ENCODE measurements at regions of chr22 and their contacts with region 1.

Region 1: DNA sequence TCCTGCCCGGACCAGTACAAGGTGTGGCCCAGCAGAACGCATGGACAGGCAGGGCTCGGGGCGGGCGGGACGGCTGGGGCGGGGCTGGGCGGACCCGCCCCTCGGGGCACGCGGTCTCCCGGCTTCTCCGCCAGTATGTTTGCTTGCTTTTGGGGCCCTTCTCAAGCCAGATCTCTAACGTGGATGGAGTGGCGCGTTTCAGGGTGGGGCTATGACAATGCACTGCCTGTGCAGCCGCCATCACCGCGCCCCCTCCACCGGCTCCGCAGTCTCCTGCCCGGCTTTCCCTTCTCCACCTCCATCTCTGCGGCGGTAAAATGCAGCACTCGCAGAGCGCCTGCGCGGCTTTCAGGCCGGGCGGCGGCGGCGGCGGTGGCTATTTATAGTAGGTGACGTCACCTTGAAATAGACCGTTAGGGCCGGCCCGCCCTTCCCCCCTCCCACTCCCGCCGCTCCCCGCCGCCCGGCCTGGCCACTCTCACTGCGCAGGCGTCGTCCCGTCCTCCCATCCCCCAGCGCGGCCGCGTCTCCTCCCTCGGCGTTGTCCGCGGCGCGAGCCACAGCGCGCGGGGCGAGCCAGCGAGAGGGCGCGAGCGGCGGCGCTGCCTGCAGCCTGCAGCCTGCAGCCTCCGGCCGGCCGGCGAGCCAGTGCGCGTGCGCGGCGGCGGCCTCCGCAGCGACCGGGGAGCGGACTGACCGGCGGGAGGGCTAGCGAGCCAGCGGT is at the start of gene YWHAH:
- DNase-seq: peak; percentile 69 to 96 (median 79)
- ATAC-seq: peak; percentile 82
- H3K4me3 ChIP-seq: peak within 1 kb of the TSS; percentile 87
- H3K4me3 Mint-ChIP-seq: peak within 1 kb of the TSS in 6 of 10 donors; percentile 89 to 94 (median 92)
- H3K27ac ChIP-seq: peak within 1 kb of the TSS; percentile 76
- H3K27ac Mint-ChIP-seq: peak within 1 kb of the TSS in 8 of 9 donors; percentile 74 to 95 (median 85)
- H3K4me1 ChIP-seq: peaks cover 18 to 21% of the 10 kb centered on the region in 2 donors
- H3K4me1 Mint-ChIP-seq: peaks cover 7 to 30% (median 14%) of the 10 kb centered on the region in 7 donors
- H3K27me3 ChIP-seq: no peaks in the 10 kb centered on the region
- H3K27me3 Mint-ChIP-seq: no peaks in the 10 kb centered on the region
- total RNA-seq, gene YWHAH: 11.7 to 130 (median 17.1) TPM

Region 2: GRCh38 chr22:31399211-31400028 is 544.7 kb before region 1 on chr22 and contains the start of gene DRG1:
- CTCF ChIA-PET with region 1: no interaction called
- POLR2A ChIA-PET with region 1: no interaction called
- intact Hi-C with region 1: loop called in 1 of 2 experiments (anchors 2 kb)
- DNase-seq: peak; percentile 90 to 98 (median 93)
- ATAC-seq: peak; percentile 99
- H3K4me3 ChIP-seq: peak within 1 kb of the TSS; percentile 88
- H3K4me3 Mint-ChIP-seq: peak within 1 kb of the TSS; percentile 92 to 99 (median 96)
- H3K27ac ChIP-seq: peak within 1 kb of the TSS; percentile 91
- H3K27ac Mint-ChIP-seq: peak within 1 kb of the TSS; percentile 85 to 97 (median 94)
- H3K4me1 ChIP-seq: peaks cover 10 to 15% of the 10 kb centered on the region in 2 donors
- H3K4me1 Mint-ChIP-seq: peaks cover 5 to 35% (median 22%) of the 10 kb centered on the region in 7 donors
- H3K27me3 ChIP-seq: no peaks in the 10 kb centered on the region
- H3K27me3 Mint-ChIP-seq: no peaks in the 10 kb centered on the region
- total RNA-seq, gene DRG1: 53.3 to 109 (median 84.4) TPM

Region 3: DNA sequence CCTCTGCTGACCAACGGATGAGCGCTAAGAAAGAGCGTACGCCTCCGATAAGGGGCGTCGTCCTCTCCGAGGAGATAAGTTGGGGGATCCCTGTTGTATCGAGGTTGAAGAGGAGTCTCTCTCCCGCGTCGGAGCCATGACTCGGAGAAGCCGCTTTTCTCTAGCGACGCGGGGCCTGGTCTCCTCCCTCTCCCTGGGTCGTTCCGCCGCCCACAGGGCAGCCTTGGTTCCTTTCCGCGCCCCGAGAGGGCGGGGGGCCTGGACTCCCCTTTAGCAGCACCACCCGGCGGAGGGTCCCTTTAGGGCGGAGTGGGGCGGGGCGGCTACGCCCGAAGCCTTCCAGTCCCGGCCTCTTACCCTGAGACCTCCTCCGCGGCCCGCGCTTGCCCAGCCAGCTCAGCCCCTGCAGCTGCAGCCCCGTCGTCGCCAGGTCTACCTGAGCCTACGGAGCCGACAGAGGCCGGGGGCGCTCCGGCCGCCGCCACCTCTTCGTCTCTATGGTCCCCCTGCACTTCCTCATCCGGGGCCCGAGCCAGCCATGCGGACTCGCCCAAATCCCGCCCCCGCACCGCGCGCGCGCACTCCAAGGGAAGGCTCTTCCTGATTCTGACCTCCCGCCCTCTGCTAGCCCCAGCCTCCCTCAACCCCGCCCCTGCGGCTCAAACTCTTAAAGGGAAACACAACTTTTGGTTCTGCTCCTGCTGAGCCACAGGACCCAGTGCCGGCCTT is 194.3 kb before region 1 on chr22 and contains the start of gene PRR14L:
- CTCF ChIA-PET with region 1: no interaction called
- POLR2A ChIA-PET with region 1: interaction called, 4 read pairs
- intact Hi-C with region 1: loop called (anchors 1 kb)
- DNase-seq: peak; percentile 94 to 100 (median 98)
- ATAC-seq: peak; percentile 86
- H3K4me3 ChIP-seq: peak within 1 kb of the TSS; percentile 92
- H3K4me3 Mint-ChIP-seq: peak within 1 kb of the TSS; percentile 87 to 97 (median 94)
- H3K27ac ChIP-seq: peak within 1 kb of the TSS; percentile 83
- H3K27ac Mint-ChIP-seq: peak within 1 kb of the TSS; percentile 82 to 98 (median 96)
- H3K4me1 ChIP-seq: peaks cover 31 to 37% of the 10 kb centered on the region in 2 donors
- H3K4me1 Mint-ChIP-seq: peaks cover 36 to 65% (median 59%) of the 10 kb centered on the region in 7 donors
- H3K27me3 ChIP-seq: no peaks in the 10 kb centered on the region
- H3K27me3 Mint-ChIP-seq: peaks cover 0 to 2% (median 0%) of the 10 kb centered on the region in 5 donors
- total RNA-seq, gene PRR14L: 43.1 to 82.6 (median 66.9) TPM

Region 4: DNA sequence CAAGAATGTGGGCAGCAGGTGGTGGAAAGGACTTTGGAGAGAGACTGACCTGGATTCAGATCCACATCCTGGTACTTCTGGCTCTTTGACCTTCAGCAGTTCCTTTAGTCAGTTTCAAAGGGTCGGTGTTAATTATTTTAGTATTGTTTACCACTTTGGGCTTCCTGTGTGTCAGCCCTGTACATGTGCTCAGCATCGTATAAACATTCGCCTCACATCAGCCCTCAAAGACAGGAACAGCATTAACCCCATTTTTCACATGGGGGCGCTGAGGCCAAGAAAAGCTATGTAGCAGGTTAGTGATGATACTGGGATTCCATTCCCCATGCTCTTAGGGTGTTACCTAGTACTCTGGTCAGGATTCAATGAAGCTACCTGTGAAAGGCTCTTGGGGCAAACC is 71.9 kb before region 1 on chr22:
- CTCF ChIA-PET with region 1: interaction called, 3 read pairs
- POLR2A ChIA-PET with region 1: no interaction called
- intact Hi-C with region 1: loop called (anchors 1 to 2 kb)
- DNase-seq: peak in 1 of 9 donors; percentile 11
- ATAC-seq: no peak
- H3K4me3 ChIP-seq: no peak overlapping the region
- H3K4me3 Mint-ChIP-seq: no peak overlapping the region
- H3K27ac ChIP-seq: no peak overlapping the region
- H3K27ac Mint-ChIP-seq: no peak overlapping the region
- H3K4me1 ChIP-seq: no peaks in the 10 kb centered on the region
- H3K4me1 Mint-ChIP-seq: peaks cover 0 to 4% (median 0%) of the 10 kb centered on the region in 7 donors
- H3K27me3 ChIP-seq: no peaks in the 10 kb centered on the region
- H3K27me3 Mint-ChIP-seq: no peaks in the 10 kb centered on the region

Region 5: DNA sequence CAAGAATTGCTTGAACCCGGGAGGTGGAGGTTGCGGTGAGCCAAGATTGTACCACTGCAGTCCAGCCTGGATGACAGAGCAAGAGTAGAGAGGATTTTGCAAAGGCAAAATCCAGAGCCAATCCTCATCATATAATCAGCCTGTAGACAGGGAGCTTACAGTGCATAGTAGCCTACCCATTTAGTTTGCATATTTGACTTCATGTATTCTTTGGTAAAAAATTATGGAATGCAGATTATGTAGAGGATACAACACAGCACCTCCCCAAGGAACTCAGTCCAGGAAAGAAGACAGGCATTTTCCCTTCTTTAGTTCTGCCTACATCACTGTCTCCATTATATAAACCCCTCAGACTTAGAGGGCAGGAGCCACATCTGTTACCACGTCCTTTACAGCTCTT is 39.5 kb before region 1 on chr22:
- CTCF ChIA-PET with region 1: no interaction called
- POLR2A ChIA-PET with region 1: no interaction called
- intact Hi-C with region 1: no loop called
- DNase-seq: no peak
- ATAC-seq: no peak
- H3K4me3 ChIP-seq: no peak overlapping the region
- H3K4me3 Mint-ChIP-seq: no peak overlapping the region
- H3K27ac ChIP-seq: no peak overlapping the region
- H3K27ac Mint-ChIP-seq: no peak overlapping the region
- H3K4me1 ChIP-seq: no peaks in the 10 kb centered on the region
- H3K4me1 Mint-ChIP-seq: peaks cover 0 to 2% (median 0%) of the 10 kb centered on the region in 7 donors
- H3K27me3 ChIP-seq: no peaks in the 10 kb centered on the region
- H3K27me3 Mint-ChIP-seq: no peaks in the 10 kb centered on the region

Region 6: GRCh38 chr22:31954535-31955523 is 10.7 kb after region 1 on chr22:
- CTCF ChIA-PET with region 1: interaction called, 7 read pairs
- POLR2A ChIA-PET with region 1: interaction called, 14 read pairs
- intact Hi-C with region 1: no loop called
- DNase-seq: no peak
- ATAC-seq: peak; percentile 38
- H3K4me3 ChIP-seq: no peak overlapping the region
- H3K4me3 Mint-ChIP-seq: peak overlapping the region in 7 of 10 donors; percentile 1 to 56 (median 39)
- H3K27ac ChIP-seq: no peak overlapping the region
- H3K27ac Mint-ChIP-seq: peak overlapping the region in 7 of 9 donors; percentile 41 to 88 (median 80)
- H3K4me1 ChIP-seq: peaks cover 23 to 43% of the 10 kb centered on the region in 2 donors
- H3K4me1 Mint-ChIP-seq: peaks cover 44 to 67% (median 53%) of the 10 kb centered on the region in 7 donors
- H3K27me3 ChIP-seq: no peaks in the 10 kb centered on the region
- H3K27me3 Mint-ChIP-seq: no peaks in the 10 kb centered on the region

Region 7: DNA sequence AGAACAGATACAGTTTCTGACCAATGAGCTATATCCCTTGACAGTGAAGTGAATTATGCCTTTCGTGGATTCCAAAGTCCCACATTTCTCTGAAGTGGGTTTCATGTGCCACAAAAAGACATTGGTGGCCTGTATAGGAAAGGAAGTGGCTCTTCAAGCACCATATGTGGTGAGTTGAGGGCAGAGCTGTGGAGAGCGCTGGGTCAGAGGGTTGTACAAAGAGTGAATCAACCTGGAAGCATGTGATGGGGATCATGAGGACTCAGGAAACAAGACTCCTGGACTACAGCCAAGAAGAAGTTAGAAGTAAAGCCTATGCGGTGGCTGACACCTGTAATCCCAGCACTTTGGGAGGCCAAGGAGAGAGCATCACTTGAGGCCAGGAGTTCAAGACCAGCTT is 311.6 kb after region 1 on chr22:
- CTCF ChIA-PET with region 1: no interaction called
- POLR2A ChIA-PET with region 1: no interaction called
- intact Hi-C with region 1: no loop called
- DNase-seq: no peak
- ATAC-seq: no peak
- H3K4me3 ChIP-seq: no peak overlapping the region
- H3K4me3 Mint-ChIP-seq: no peak overlapping the region
- H3K27ac ChIP-seq: no peak overlapping the region
- H3K27ac Mint-ChIP-seq: no peak overlapping the region
- H3K4me1 ChIP-seq: no peaks in the 10 kb centered on the region
- H3K4me1 Mint-ChIP-seq: peaks cover 0 to 6% (median 0%) of the 10 kb centered on the region in 7 donors
- H3K27me3 ChIP-seq: no peaks in the 10 kb centered on the region
- H3K27me3 Mint-ChIP-seq: peaks cover 17 to 45% (median 30%) of the 10 kb centered on the region in 5 donors

Region 8: DNA sequence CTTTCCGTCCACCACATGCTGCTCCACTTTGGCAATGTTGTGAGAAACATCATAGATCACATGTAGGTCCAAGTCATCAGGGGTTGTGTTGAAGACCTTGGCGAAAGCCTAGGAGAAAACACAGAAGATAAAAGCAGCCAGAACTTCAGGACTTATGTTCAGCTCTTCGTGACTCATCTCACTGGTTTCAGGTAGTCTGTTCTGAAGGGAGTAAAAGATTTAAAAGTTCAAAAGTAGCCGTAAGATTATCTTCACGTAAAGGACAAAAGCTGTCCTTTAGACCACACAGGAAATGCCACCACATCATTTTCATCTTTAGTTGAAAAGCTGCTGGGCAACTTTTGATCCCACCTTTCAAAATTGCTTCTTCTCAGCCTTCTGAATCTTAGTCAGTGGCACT is 451.0 kb after region 1 on chr22:
- CTCF ChIA-PET with region 1: no interaction called
- POLR2A ChIA-PET with region 1: no interaction called
- intact Hi-C with region 1: no loop called
- DNase-seq: no peak
- ATAC-seq: no peak
- H3K4me3 ChIP-seq: no peak overlapping the region
- H3K4me3 Mint-ChIP-seq: no peak overlapping the region
- H3K27ac ChIP-seq: no peak overlapping the region
- H3K27ac Mint-ChIP-seq: peak overlapping the region in 3 of 9 donors; percentile 3 to 40 (median 20)
- H3K4me1 ChIP-seq: no peaks in the 10 kb centered on the region
- H3K4me1 Mint-ChIP-seq: peaks cover 0 to 6% (median 0%) of the 10 kb centered on the region in 7 donors
- H3K27me3 ChIP-seq: no peaks in the 10 kb centered on the region
- H3K27me3 Mint-ChIP-seq: no peaks in the 10 kb centered on the region

Region 9: DNA sequence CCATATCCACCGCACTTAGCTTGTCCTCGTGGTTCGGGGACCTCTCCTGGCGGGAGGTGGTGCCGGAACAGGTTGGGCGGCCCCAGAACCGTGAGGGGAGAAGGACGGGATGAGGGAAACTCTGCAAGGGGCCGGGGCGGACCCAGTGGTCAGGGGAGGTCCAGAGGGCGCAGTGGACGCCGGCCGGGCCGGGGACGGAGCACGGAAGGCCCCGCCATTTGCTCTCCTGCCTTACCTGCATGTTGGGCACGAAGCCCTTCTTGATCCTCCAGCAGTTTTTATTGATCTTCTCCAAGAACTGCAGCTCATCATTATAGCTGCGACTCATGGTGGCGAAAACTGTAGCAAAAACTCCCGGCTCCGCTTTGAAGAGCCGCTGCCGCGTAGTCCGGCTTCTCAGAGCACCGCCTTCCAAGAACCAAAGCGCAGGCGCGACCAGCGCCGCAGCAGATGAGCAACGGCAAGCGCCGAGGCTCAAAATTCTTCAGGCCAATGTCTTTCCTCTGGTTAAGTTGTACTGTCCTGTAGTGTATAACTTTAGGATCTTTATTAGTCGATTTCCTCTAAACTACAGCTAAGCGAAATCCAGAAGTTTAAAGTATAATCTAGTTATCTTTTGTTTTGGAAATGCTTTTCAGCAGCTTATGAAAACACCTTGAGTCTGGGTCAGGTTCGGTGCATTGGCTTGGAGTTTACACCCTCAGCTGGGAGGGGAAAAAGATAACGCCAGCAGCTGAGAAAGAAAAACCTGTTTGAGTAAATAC is 467.9 kb after region 1 on chr22 and contains the start of gene RTCB:
- CTCF ChIA-PET with region 1: no interaction called
- POLR2A ChIA-PET with region 1: no interaction called
- intact Hi-C with region 1: loop called in 1 of 2 experiments (anchors 1 kb)
- DNase-seq: peak; percentile 86 to 93 (median 90)
- ATAC-seq: peak; percentile 94
- H3K4me3 ChIP-seq: peak within 1 kb of the TSS; percentile 89
- H3K4me3 Mint-ChIP-seq: peak within 1 kb of the TSS; percentile 96 to 99 (median 98)
- H3K27ac ChIP-seq: peak within 1 kb of the TSS; percentile 92
- H3K27ac Mint-ChIP-seq: peak within 1 kb of the TSS; percentile 90 to 98 (median 96)
- H3K4me1 ChIP-seq: peaks cover 12 to 14% of the 10 kb centered on the region in 2 donors
- H3K4me1 Mint-ChIP-seq: peaks cover 22 to 62% (median 58%) of the 10 kb centered on the region in 7 donors
- H3K27me3 ChIP-seq: no peaks in the 10 kb centered on the region
- H3K27me3 Mint-ChIP-seq: peaks cover 0 to 11% (median 0%) of the 10 kb centered on the region in 5 donors
- total RNA-seq, gene RTCB: 41.6 to 59.7 (median 54.6) TPM